Astrocyte of the cerebellum (primary cell): ENCODE measurements at regions of chr7 and their contacts with region 1.

Region 1: DNA sequence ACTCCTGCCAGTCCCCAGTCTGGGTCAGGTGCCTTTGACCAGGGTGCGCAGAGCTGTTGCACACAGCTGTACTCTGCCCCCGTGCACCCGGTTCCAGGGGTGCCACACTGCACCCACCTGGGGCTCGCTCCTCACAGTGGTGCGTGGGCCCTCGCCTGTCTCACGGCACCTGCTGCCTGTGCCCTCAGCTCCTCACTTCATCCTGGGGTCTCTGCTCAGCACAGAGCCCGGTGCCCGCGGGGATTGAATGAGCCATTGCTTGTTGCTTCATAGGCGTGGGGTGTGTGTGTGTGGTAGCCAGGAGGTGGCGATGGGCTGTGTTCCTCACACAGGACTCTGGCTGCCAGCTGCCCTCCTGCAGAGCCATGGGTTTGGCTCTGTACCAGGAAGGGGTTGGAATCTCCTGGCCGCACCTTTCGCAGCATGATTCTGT is 18.5 kb downstream of the EIF3B start:
- DNase-seq: peak; percentile 52
- H3K4me3 ChIP-seq: no peak overlapping the region
- CTCF ChIP-seq: peak; percentile 34

Region 2: GRCh38 chr7:2309889-2310331 is 63.2 kb before region 1 on chr7:
- in situ Hi-C with region 1: loop called (anchors 10 kb)
- DNase-seq: peak; percentile 79
- H3K4me3 ChIP-seq: no peak overlapping the region
- CTCF ChIP-seq: no peak

Region 3: GRCh38 chr7:2321020-2321419 is 52.1 kb before region 1 on chr7:
- in situ Hi-C with region 1: no loop called
- DNase-seq: no peak
- H3K4me3 ChIP-seq: no peak overlapping the region
- CTCF ChIP-seq: peak; percentile 24